Ovary (tissue), 10 donors: ENCODE measurements at regions of chr21 and their contacts with region 1.

Region 1: GRCh38 chr21:40143822-40144525 is 276.7 kb downstream of the PCP4 start:
- DNase-seq: peak in 1 of 5 donors; percentile 42
- H3K4me3 ChIP-seq: no peak overlapping the region
- H3K27ac ChIP-seq: no peak overlapping the region
- H3K4me1 ChIP-seq: no peaks in the 10 kb centered on the region
- H3K27me3 ChIP-seq: no peaks in the 10 kb centered on the region
- CTCF ChIP-seq: peak in 1 of 3 donors; percentile 27
- EP300 ChIP-seq: no peak
- POLR2A ChIP-seq: no peak

Region 2: GRCh38 chr21:41071258-41072171 is 927.5 kb after region 1 on chr21:
- intact Hi-C with region 1: loop called in 1 of 4 experiments (anchors 10 kb)
- DNase-seq: no peak
- H3K4me3 ChIP-seq: no peak overlapping the region
- H3K27ac ChIP-seq: no peak overlapping the region
- H3K4me1 ChIP-seq: no peaks in the 10 kb centered on the region
- H3K27me3 ChIP-seq: no peaks in the 10 kb centered on the region
- CTCF ChIP-seq: no peak
- EP300 ChIP-seq: no peak
- POLR2A ChIP-seq: no peak